ENCODE measurements at regions of chr17 and their contacts with region 1.

Region 1: DNA sequence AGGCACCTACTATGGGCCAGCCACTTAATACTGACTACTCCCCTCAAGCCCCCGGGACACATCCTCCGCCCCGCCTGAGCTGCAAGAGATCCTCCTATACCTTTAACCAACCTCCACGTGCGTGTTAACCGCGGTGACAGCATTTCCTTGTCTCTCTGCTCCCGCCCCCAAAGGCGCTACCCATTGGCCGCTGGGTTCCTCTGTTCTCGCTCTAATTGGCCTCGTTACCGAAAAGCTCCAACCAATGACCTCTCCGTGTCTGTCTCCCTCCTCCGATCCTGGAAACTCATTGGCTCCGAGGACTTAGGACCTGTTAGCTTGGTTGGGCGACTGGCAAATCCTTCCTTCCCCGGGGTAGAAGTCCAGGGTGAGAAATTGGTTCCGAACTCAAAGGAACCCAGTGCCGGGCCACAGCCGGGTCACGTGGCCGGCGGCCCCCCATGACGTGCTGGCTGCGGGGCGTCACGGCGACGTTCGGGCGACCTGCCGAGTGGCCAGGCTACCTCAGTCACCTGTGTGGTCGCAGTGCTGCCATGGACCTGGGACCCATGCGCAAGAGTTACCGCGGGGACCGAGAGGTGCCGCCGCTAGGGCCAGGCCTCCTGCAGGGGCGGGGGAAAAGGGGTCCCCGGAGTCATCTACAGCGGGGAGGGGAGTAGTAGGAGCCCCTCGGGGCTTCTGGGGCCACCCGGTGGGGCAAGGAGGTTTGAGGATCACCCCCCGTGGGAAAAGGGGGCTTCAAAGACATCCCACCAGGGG is at the start of gene PNPO:
- DNase-seq: peak; percentile 98
- H3K4me3 Mint-ChIP-seq: peak within 1 kb of the TSS; percentile 90
- H3K27ac Mint-ChIP-seq: peak within 1 kb of the TSS; percentile 94
- H3K4me1 Mint-ChIP-seq: peaks cover 42% of the 10 kb centered on the region
- H3K27me3 Mint-ChIP-seq: no peaks in the 10 kb centered on the region
- total RNA-seq, gene PNPO: 61.5 and 69.4 TPM in 2 replicates

Region 2: DNA sequence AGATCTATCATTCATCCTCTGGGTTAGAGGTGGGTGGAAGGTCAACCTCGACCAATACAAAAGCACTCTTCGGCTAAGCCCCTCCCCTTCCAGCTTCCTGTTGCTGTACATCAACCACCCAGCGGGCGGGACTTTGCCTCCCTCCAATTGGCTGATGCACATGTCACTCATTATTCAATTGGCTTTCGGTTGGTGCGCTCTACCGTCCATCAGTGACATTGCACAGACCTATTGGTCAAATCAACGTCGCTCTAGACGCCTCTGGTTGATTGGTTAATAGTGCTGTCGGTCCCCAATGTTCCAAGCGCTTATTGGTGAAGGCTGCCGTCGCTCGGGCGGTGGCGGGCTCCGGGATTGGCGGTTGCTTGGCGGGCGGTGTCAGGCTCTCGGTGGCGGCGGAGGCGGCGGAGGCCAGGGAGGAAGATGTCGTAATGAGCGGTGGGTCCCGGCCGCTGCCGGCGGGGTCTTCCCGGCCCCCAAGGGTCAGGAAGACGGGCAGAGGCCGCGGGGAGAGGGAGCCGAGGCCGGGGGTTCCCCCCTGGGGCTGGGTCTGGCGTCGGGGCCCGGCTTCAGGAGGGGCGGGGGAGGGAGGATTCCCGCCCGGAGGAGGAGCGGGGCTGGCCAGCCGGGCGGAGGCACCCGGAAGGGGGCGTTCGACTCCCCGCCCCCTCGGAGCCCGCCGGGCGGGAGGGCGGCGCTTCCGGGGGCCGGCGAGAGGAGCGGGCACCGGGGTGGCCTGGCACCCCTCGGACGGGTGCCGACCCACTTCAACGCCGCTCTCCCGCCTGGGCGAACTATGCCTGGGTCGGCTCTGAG is 45.4 kb before region 1 on chr17 and contains the start of gene SP2:
- intact Hi-C with region 1: loop called (anchors 2 kb)
- DNase-seq: peak; percentile 100
- H3K4me3 Mint-ChIP-seq: peak within 1 kb of the TSS; percentile 97
- H3K27ac Mint-ChIP-seq: peak within 1 kb of the TSS; percentile 99
- H3K4me1 Mint-ChIP-seq: peaks cover 41% of the 10 kb centered on the region
- H3K27me3 Mint-ChIP-seq: no peaks in the 10 kb centered on the region
- total RNA-seq, gene SP2: 18.3 and 21.7 TPM in 2 replicates

Region 3: GRCh38 chr17:48107168-48108132 is 166.0 kb after region 1 on chr17 and contains the start of gene SNX11:
- intact Hi-C with region 1: loop called (anchors 10 kb)
- DNase-seq: peak; percentile 98
- H3K4me3 Mint-ChIP-seq: peak within 1 kb of the TSS; percentile 98
- H3K27ac Mint-ChIP-seq: peak within 1 kb of the TSS; percentile 95
- H3K4me1 Mint-ChIP-seq: peaks cover 51% of the 10 kb centered on the region
- H3K27me3 Mint-ChIP-seq: no peaks in the 10 kb centered on the region
- total RNA-seq, gene SNX11: 33.3 and 34.9 TPM in 2 replicates

Measured in activated CD4-positive, alpha-beta T cell treated with anti-CD3 and anti-CD28 coated beads, Interleukin-2, amount 10 ng/mL, durations not matched to agents 24 days and 14 days (primary cell).